ENCODE measurements at regions of chr5 and their contacts with region 1.

Region 1: GRCh38 chr5:5481206-5481605 is 58.7 kb downstream of the ICE1 start:
- DNase-seq: peak in 1 of 2 donors; percentile 23
- ATAC-seq: peak; percentile 55 to 83
- H3K4me3 ChIP-seq: peak overlapping the region in 1 of 4 donors; percentile 20
- H3K27ac ChIP-seq: peak overlapping the region; percentile 71 to 85 (median 84)
- H3K4me1 ChIP-seq: peaks cover 23 to 28% of the 10 kb centered on the region in 2 donors
- H3K27me3 ChIP-seq: no peaks in the 10 kb centered on the region
- CTCF ChIP-seq: no peak
- POLR2A ChIP-seq: no peak

Region 2: GRCh38 chr5:6827526-6828219 is 1346.5 kb after region 1 on chr5:
- in situ Hi-C with region 1: no loop called
- intact Hi-C with region 1: loop called (anchors 5 kb)
- DNase-seq: no peak
- ATAC-seq: no peak
- H3K4me3 ChIP-seq: no peak overlapping the region
- H3K27ac ChIP-seq: no peak overlapping the region
- H3K4me1 ChIP-seq: peaks cover 10 to 28% of the 10 kb centered on the region in 2 donors
- H3K27me3 ChIP-seq: no peaks in the 10 kb centered on the region
- CTCF ChIP-seq: no peak
- POLR2A ChIP-seq: no peak

Measured in gastrocnemius medialis (tissue), 4 donors.